Naive thymus-derived CD4-positive, alpha-beta T cell (primary cell): ENCODE measurements at regions of chr2 and their contacts with region 1.

Region 1: DNA sequence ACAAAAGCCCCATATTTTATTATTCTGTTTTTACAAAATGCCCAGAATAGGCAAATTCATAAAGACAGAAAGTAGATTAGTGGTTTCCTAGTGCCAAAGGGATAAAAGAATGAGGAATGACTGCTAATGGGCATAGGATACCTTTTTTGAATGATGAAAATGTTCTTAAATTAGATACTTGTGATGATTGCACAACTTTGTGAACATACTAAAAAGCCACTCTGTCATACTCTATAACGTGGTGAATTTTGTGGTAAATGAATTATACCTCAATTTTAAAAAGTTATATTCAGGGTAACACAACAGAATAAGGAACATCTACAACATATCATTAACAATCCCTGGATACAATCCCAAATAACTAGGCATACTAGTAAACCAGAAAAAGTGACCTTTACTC is 9.1 kb upstream of the FBLN7 start:
- DNase-seq: no peak
- ATAC-seq: no peak
- H3K4me3 ChIP-seq: no peak overlapping the region
- H3K4me3 Mint-ChIP-seq: no peak overlapping the region
- H3K27ac ChIP-seq: no peak overlapping the region
- H3K27ac Mint-ChIP-seq: no peak overlapping the region
- H3K4me1 ChIP-seq: no peaks in the 10 kb centered on the region
- H3K4me1 Mint-ChIP-seq: peaks cover 6 to 12% (median 11%) of the 10 kb centered on the region in 7 donors
- H3K27me3 ChIP-seq: no peaks in the 10 kb centered on the region
- H3K27me3 Mint-ChIP-seq: no peaks in the 10 kb centered on the region

Region 2: DNA sequence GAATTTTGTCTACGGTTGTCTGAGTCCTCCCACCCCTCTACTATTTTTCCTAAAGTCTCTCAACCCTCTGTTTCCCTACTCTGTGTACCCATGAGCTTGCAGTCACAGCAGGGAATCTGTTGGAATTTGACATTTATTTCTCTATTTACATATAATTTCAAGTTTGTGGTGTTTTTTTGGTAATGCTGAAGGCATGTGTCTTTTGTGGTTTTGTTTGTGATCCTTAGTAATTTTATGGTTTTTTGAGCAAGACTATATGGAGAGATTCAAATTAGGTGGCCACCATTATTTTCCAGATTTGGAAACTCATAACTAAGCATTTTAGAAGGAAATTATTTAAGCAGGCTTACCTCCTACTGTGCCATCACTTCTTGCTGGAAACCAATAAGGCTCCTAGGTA is 18.1 kb before region 1 on chr2:
- CTCF ChIA-PET with region 1: no interaction called
- POLR2A ChIA-PET with region 1: no interaction called
- intact Hi-C with region 1: no loop called
- DNase-seq: no peak
- ATAC-seq: no peak
- H3K4me3 ChIP-seq: no peak overlapping the region
- H3K4me3 Mint-ChIP-seq: no peak overlapping the region
- H3K27ac ChIP-seq: no peak overlapping the region
- H3K27ac Mint-ChIP-seq: no peak overlapping the region
- H3K4me1 ChIP-seq: no peaks in the 10 kb centered on the region
- H3K4me1 Mint-ChIP-seq: peaks cover 0 to 4% (median 0%) of the 10 kb centered on the region in 7 donors
- H3K27me3 ChIP-seq: no peaks in the 10 kb centered on the region
- H3K27me3 Mint-ChIP-seq: no peaks in the 10 kb centered on the region

Region 3: DNA sequence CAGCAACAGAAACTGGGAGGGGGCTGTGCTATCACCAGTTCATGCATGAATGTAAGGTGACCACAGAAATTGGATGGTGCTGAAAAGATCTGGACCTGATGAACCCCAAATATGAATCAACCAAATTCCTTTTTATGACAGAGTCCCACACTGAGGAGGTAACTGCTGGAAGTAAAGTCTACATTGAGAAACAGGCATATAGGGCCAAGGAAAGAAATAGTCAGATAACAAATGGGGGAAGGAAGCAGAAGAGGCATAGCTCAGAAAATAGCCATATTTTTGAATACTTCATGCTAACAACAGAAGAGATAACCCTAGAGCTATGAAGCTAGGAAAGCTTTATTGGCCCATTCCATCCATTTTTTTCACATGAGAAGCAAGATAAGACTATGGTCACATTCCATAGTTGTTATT is 172.1 kb after region 1 on chr2:
- CTCF ChIA-PET with region 1: no interaction called
- POLR2A ChIA-PET with region 1: no interaction called
- intact Hi-C with region 1: loop called in 1 of 2 experiments (anchors 5 kb)
- DNase-seq: no peak
- ATAC-seq: no peak
- H3K4me3 ChIP-seq: no peak overlapping the region
- H3K4me3 Mint-ChIP-seq: no peak overlapping the region
- H3K27ac ChIP-seq: no peak overlapping the region
- H3K27ac Mint-ChIP-seq: no peak overlapping the region
- H3K4me1 ChIP-seq: no peaks in the 10 kb centered on the region
- H3K4me1 Mint-ChIP-seq: peaks cover 2 to 17% (median 7%) of the 10 kb centered on the region in 7 donors
- H3K27me3 ChIP-seq: no peaks in the 10 kb centered on the region
- H3K27me3 Mint-ChIP-seq: no peaks in the 10 kb centered on the region